PC-3 (cell line): ENCODE measurements at regions of chr7 and their contacts with region 1.

Region 1: DNA sequence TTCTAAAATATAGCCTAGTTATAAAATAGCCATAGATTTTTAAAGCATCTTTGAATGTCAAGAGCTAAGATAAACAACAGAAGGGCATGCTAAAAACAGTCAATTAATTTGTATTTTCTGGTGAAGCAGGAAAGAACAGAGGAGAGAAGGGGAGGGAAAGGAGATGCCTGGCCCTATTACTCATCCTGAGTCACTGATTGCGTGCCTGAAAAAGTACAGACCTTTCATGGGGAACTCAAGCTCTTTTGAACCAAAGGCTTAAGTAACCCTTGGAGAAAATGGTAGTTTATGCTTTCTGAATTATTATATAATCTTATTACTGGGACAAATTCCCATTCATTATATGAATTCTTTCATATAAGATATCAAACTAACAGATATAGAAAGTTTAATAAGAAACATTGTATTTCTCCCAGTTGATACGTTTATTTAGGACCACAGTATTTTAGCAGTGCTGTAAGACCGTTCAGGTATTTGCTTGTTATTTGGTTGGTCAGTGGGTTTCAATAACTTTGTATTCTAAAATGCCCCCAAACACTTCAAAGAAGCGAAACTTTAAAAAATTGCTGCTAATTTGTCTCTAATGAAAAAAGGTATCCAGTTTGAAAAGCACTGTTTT is 151.3 kb downstream of the HGF start:
- DNase-seq: peak; percentile 90
- ATAC-seq: peak; percentile 86
- H3K4me3 ChIP-seq: no peak overlapping the region
- H3K27ac ChIP-seq: peak overlapping the region; percentile 94
- H3K4me1 ChIP-seq: peaks cover 38% of the 10 kb centered on the region
- H3K27me3 ChIP-seq: no peaks in the 10 kb centered on the region
- CTCF ChIP-seq: no peak

Region 2: GRCh38 chr7:80984619-80985018 is 633.9 kb before region 1 on chr7:
- CTCF ChIA-PET with region 1: no interaction called
- POLR2A ChIA-PET with region 1: no interaction called
- intact Hi-C with region 1: no loop called
- DNase-seq: no peak
- ATAC-seq: no peak
- H3K4me3 ChIP-seq: no peak overlapping the region
- H3K27ac ChIP-seq: no peak overlapping the region
- H3K4me1 ChIP-seq: no peaks in the 10 kb centered on the region
- H3K27me3 ChIP-seq: no peaks in the 10 kb centered on the region
- CTCF ChIP-seq: no peak

Region 3: GRCh38 chr7:81690251-81690650 is 71.7 kb after region 1 on chr7:
- CTCF ChIA-PET with region 1: no interaction called
- POLR2A ChIA-PET with region 1: no interaction called
- intact Hi-C with region 1: loop called (anchors 5 kb)
- DNase-seq: peak; percentile 66
- ATAC-seq: peak; percentile 59
- H3K4me3 ChIP-seq: peak overlapping the region; percentile 50
- H3K27ac ChIP-seq: peak overlapping the region; percentile 89
- H3K4me1 ChIP-seq: peaks cover 59% of the 10 kb centered on the region
- H3K27me3 ChIP-seq: no peaks in the 10 kb centered on the region
- CTCF ChIP-seq: no peak